ENCODE measurements at regions of chr1 and their contacts with region 1.

Region 1: GRCh38 chr1:228650147-228650546 is 85.1 kb upstream of the RHOU start:
- DNase-seq: no peak
- H3K27ac ChIP-seq: no peak overlapping the region
- CTCF ChIP-seq: no peak

Region 2: GRCh38 chr1:228150461-228151179 is 499.5 kb before region 1 on chr1:
- CTCF ChIA-PET with region 1: no interaction called
- POLR2A ChIA-PET with region 1: no interaction called
- DNase-seq: peak; percentile 44
- H3K27ac ChIP-seq: peak overlapping the region; percentile 100
- CTCF ChIP-seq: no peak

Region 3: GRCh38 chr1:228664399-228664914 is 14.3 kb after region 1 on chr1:
- CTCF ChIA-PET with region 1: interaction called, 10 read pairs
- POLR2A ChIA-PET with region 1: no interaction called
- DNase-seq: peak; percentile 68
- H3K27ac ChIP-seq: no peak overlapping the region
- CTCF ChIP-seq: peak; percentile 81

Measured in RWPE1 (cell line).